A673 (cell line): ENCODE measurements at regions of chr3 and their contacts with region 1.

Region 1: GRCh38 chr3:187064196-187065115 is 74.8 kb downstream of the RPL39L start:
- DNase-seq: peak; percentile 47
- H3K4me3 ChIP-seq: no peak overlapping the region
- H3K27ac ChIP-seq: peak overlapping the region; percentile 32
- H3K4me1 ChIP-seq: peaks cover 39% of the 10 kb centered on the region
- H3K27me3 ChIP-seq: no peaks in the 10 kb centered on the region
- CTCF ChIP-seq: no peak

Region 2: GRCh38 chr3:187080799-187081450 is 16.5 kb after region 1 on chr3:
- CTCF ChIA-PET with region 1: no interaction called
- POLR2A ChIA-PET with region 1: interaction called, 14 read pairs
- intact Hi-C with region 1: no loop called
- DNase-seq: peak; percentile 34
- H3K4me3 ChIP-seq: no peak overlapping the region
- H3K27ac ChIP-seq: peak overlapping the region; percentile 18
- H3K4me1 ChIP-seq: peaks cover 32% of the 10 kb centered on the region
- H3K27me3 ChIP-seq: no peaks in the 10 kb centered on the region
- CTCF ChIP-seq: no peak

Region 3: DNA sequence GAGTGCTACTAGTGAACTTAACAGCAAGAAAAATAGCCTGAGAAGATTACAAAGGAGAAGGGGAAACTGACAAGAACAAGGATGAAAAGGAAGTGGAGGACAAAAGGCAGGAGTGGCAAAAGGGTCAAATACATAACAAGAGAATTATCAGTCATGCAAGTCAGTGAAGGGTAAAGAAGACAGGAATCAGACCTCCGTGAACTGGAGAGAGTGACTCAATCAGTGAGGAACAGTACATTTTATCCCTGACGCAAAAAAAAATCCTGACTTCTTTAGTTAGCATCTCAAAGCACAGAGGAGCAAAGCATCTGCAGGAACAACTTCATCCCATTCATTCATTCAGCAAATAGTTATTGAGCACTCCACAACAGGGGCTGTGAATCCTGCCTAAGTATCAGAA is 508.0 kb after region 1 on chr3:
- CTCF ChIA-PET with region 1: no interaction called
- POLR2A ChIA-PET with region 1: no interaction called
- intact Hi-C with region 1: no loop called
- DNase-seq: no peak
- H3K4me3 ChIP-seq: no peak overlapping the region
- H3K27ac ChIP-seq: no peak overlapping the region
- H3K4me1 ChIP-seq: peaks cover 5% of the 10 kb centered on the region
- H3K27me3 ChIP-seq: no peaks in the 10 kb centered on the region
- CTCF ChIP-seq: no peak